OCI-LY7 (cell line): ENCODE measurements at regions of chr7 and their contacts with region 1.

Region 1: GRCh38 chr7:30652698-30653641 is 29.3 kb downstream of the CRHR2 start:
- DNase-seq: no peak
- H3K4me3 ChIP-seq: no peak overlapping the region
- H3K27ac ChIP-seq: no peak overlapping the region
- H3K4me1 ChIP-seq: no peaks in the 10 kb centered on the region
- CTCF ChIP-seq: no peak

Region 2: DNA sequence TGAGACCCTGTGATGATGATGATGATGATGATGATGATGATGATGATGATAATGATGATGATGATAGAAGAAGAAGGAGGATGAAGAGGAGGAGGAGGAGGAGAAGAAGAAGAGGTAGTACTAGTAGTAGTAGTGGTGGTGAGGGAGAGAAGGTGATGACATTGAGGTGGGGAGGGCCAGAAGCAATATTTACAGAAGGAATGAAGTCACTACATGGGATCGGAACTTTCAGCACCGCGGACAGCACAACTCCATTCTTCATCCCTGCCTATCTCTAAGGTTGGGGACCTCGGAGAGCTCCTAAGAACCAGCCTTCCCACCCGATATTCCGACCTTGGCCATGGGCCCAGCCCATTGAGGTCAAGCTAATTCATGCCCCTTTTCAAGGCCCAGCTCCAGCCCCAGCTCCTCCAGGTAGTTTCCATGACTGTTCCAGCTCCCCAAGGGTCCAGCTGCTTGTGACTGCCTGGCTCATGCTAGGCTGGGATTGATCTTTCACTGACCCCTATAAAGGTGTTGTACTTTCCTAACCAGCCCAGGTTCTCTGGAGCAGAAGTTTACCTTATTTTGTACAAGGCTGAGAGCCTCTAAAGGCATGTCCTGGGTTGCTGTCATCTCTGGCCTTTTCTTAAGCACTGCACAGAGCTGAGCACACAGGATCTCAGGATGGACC is 19.0 kb after region 1 on chr7:
- CTCF ChIA-PET with region 1: no interaction called
- POLR2A ChIA-PET with region 1: interaction called, 4 read pairs
- intact Hi-C with region 1: loop called (anchors 1 kb)
- DNase-seq: peak; percentile 33
- H3K4me3 ChIP-seq: no peak overlapping the region
- H3K27ac ChIP-seq: no peak overlapping the region
- H3K4me1 ChIP-seq: no peaks in the 10 kb centered on the region
- CTCF ChIP-seq: no peak

Region 3: DNA sequence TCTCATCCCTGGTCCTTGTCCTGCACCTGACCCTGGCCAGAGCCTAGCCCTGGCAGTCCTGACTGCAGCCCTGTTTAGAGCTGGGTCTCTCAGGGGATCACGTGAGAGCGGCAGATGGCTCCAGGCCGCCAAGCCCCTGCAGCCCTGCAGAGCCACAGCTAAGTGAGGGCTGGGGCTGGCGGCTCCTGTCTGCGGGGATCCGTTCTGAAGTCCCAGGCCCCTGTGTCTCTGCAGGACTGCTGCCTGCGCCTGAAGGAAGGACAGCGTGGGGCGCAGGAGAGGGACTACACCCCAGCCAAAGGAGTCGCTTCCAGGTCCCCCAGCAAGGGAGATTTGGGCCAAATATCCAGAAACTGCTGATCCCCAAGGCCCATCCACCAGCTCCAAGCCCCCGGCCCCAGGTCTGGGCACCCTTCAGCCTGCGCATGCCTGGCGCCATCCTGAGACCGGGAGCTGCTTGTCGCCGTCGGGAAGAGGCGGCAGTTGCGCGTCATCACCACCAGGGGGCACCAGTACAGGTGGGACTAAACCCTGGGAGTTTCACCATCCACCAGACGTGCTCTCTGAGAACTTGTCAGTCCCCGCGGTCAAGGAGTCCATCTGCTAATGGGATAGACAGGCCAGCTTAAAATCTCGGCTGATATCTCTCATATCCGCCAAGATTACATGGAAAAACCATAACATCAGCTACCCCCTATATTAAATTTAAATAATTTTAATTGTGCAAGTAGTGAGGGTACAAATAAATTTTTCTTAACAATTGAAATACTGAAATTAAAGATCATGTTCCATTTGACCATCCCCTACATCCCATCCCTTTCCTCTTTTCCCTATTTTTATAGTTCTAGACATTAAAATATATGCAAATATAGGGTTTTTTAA is 285.7 kb after region 1 on chr7:
- CTCF ChIA-PET with region 1: no interaction called
- POLR2A ChIA-PET with region 1: no interaction called
- intact Hi-C with region 1: no loop called
- DNase-seq: peak; percentile 67
- H3K4me3 ChIP-seq: no peak overlapping the region
- H3K27ac ChIP-seq: no peak overlapping the region
- H3K4me1 ChIP-seq: no peaks in the 10 kb centered on the region
- CTCF ChIP-seq: peak; percentile 87